Pancreas (tissue), 10 donors: ENCODE measurements at regions of chr14 and their contacts with region 1.

Region 1: DNA sequence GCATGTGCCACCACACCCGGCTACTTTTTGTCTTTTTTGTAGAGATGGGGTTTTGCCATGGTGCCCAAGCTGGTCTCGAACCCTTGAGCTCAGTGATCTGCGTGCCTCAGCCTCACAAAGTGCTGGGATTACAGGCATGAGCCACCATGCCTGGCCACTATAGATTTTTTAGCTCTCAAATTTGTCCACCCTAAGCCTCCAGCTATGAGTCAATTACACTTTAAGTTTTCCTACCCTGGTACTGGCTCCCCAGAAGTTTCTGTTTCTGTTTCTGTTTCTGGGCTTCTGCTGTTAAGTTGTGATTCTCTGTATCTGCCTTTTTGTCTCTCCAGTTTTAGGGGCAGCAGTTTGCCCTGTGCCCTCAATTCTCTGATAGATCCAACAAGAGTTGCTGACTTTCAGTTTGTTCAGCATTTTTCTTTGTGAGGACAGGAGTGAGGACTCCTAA is 4.4 kb upstream of the TINF2 start:
- DNase-seq: peak in 1 of 6 donors; percentile 7
- ATAC-seq: no peak
- H3K4me3 ChIP-seq: no peak overlapping the region
- H3K27ac ChIP-seq: no peak overlapping the region
- H3K4me1 ChIP-seq: no peaks in the 10 kb centered on the region
- H3K27me3 ChIP-seq: no peaks in the 10 kb centered on the region
- CTCF ChIP-seq: no peak

Region 2: GRCh38 chr14:22781586-22781991 is 1465.2 kb before region 1 on chr14:
- intact Hi-C with region 1: no loop called
- DNase-seq: no peak
- ATAC-seq: peak in 1 of 4 donors; percentile 12
- H3K4me3 ChIP-seq: no peak overlapping the region
- H3K27ac ChIP-seq: peak overlapping the region in 1 of 4 donors; percentile 15
- H3K4me1 ChIP-seq: peaks cover 0 to 6% (median 0%) of the 10 kb centered on the region in 3 donors
- H3K27me3 ChIP-seq: no peaks in the 10 kb centered on the region
- CTCF ChIP-seq: no peak

Region 3: DNA sequence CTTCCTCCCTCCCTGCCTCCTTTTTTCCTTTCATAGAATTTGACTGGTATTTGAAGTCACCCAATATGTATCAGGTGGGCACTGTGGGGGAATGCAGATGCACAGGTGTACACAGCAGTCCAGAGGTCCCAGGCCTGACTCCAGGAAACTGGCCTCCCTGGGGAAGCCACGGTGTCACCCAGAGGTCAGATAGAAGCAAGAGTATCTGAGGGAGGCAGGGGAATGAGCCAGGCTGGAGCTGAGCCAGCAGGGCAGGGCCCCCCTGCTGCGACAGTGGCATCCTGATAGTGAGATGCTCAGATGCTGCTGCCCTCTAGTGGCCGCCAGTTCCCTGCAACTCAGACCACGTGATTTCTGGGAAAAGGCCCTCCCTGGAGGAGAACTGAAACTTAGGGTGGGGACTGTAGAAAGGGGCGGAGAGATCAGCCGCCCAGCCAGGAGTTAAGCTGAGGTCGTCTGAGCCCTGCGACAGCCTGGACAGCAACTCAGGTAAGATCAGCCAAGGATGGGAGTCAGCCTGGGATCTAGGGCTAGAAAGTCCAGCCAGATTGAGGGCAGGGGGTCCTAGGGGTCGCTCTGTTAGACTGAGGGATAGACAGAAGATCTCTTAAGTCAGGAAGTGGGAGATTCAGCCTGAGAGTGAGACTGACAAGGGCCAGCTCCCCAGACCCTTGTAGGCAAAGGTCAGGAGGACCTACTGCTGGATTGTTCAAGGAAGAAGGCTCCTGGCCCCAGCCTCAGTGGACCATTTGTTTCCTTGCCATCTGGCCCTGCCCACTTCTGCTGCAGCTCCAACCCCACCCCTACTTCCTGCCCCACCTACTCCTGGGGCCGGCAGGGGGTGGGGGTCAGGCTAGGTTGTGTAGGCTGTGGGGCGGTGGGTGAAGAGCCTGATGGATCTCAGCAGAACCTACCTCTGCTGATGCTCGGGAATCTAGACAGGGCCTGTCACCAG is 85.7 kb before region 1 on chr14 and contains the start of gene IRF9:
- intact Hi-C with region 1: no loop called
- DNase-seq: peak; percentile 93 to 97 (median 96)
- ATAC-seq: peak; percentile 94 to 96 (median 96)
- H3K4me3 ChIP-seq: peak within 1 kb of the TSS; percentile 37 to 74 (median 58)
- H3K27ac ChIP-seq: peak within 1 kb of the TSS; percentile 71 to 92 (median 82)
- H3K4me1 ChIP-seq: peaks cover 0 to 19% (median 0%) of the 10 kb centered on the region in 3 donors
- H3K27me3 ChIP-seq: no peaks in the 10 kb centered on the region
- CTCF ChIP-seq: peak; percentile 89 to 96 (median 92)
- total RNA-seq, gene IRF9: 20.3 to 60.7 (median 27.9) TPM

Region 4: GRCh38 chr14:24279301-24280186 is 32.8 kb after region 1 on chr14:
- intact Hi-C with region 1: loop called in 1 of 3 experiments (anchors 5 kb)
- DNase-seq: peak in 2 of 6 donors; percentile 60 to 68
- ATAC-seq: peak; percentile 56 to 70 (median 66)
- H3K4me3 ChIP-seq: no peak overlapping the region
- H3K27ac ChIP-seq: no peak overlapping the region
- H3K4me1 ChIP-seq: peaks cover 0 to 3% (median 0%) of the 10 kb centered on the region in 3 donors
- H3K27me3 ChIP-seq: no peaks in the 10 kb centered on the region
- CTCF ChIP-seq: no peak

Region 5: DNA sequence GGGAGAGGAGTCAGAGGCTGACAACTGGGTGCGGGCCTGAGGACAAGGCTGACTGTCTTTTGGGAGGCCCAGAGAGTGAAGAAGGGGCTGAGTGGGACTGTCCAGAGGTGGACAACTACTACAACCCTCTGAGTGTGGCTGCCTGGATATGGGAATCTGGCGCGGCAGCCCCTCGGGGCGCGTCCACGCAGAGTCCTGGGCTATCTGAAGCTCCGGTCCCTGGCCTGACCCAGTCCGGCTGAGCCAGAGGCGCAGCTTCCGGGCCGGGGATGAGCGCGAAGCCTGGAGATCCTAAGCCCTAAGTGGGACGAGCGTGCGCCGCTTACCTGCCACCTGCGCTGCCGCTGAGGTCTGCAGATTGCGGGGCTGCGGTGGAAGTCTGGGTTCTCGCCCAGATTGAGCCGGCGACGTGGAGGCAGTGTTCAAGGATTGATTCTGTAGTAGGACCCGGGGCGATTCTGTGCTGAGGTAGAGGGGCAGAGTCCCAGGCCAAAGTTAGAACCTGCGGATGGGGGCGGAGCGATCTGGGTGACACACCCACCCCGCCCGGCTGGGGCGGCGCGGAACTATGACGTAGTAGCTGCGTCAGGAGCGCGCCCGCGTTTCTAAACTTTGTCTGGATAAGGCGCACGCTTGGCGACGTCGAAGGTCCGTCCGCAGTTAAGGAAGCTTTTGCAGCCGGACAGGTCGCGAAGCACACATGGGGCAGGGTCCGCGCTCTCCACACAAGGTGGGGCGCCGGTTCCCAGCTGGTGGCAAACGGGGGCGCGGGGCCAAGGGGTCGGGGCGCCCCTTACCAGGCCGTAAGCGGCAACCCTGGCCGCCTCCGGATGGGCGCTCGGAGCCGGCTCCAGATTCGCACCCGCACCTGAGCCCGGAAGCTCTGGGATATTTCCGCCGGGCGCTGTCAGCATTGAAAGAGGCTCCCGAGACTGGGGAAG is 52.7 kb after region 1 on chr14 and contains the starts of genes DHRS1 and NOP9:
- intact Hi-C with region 1: loop called in 1 of 3 experiments (anchors 5 kb)
- DNase-seq: peak; percentile 85 to 98 (median 94)
- ATAC-seq: peak; percentile 92 to 96 (median 94)
- H3K4me3 ChIP-seq: peak within 1 kb of the TSS; percentile 54 to 92 (median 74)
- H3K27ac ChIP-seq: peak within 1 kb of the TSS; percentile 68 to 83 (median 78)
- H3K4me1 ChIP-seq: peaks cover 9 to 29% (median 13%) of the 10 kb centered on the region in 3 donors
- H3K27me3 ChIP-seq: no peaks in the 10 kb centered on the region
- CTCF ChIP-seq: no peak
- total RNA-seq, gene DHRS1: 6.1 to 15.3 (median 11.2) TPM
- total RNA-seq, gene NOP9: 8.8 to 13.9 (median 11.3) TPM

Region 6: GRCh38 chr14:24411443-24412389 is 164.9 kb after region 1 on chr14:
- intact Hi-C with region 1: no loop called
- DNase-seq: peak in 1 of 6 donors; percentile 57
- ATAC-seq: peak; percentile 61 to 85 (median 76)
- H3K4me3 ChIP-seq: no peak overlapping the region
- H3K27ac ChIP-seq: no peak overlapping the region
- H3K4me1 ChIP-seq: no peaks in the 10 kb centered on the region
- H3K27me3 ChIP-seq: no peaks in the 10 kb centered on the region
- CTCF ChIP-seq: peak; percentile 28 to 59 (median 42)